GM12878 (cell line): ENCODE measurements at regions of chr7 and their contacts with region 1.

Region 1: DNA sequence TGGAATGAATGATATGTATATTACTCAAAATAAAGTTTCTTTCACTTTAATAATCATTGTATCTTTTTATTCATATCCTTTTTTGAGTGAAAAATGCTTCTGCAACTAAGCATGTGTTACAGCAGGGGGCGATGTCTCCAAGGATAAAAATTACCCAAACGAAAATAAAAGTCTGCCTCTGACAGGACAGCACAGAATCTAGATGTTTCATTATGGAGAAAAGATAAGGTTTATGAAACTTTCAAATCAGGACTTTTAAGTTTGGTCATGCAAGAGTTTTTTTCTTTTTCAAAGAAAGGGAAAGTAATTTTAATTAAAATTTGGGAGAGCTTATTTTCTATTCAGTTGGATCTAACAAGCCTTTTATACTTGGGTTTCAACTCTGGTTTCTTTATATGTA is 48.4 kb downstream of the TES start:
- DNase-seq: peak; percentile 23
- ATAC-seq: peak; percentile 59
- H3K4me3 ChIP-seq: no peak overlapping the region
- H3K27ac ChIP-seq: no peak overlapping the region
- H3K4me1 ChIP-seq: no peaks in the 10 kb centered on the region
- H3K27me3 ChIP-seq: no peaks in the 10 kb centered on the region
- CTCF ChIP-seq: peak; percentile 53 to 76 (median 65); a peak in 5 of 6 replicates
- EP300 ChIP-seq: no peak
- POLR2A ChIP-seq: no peak
- RAD21 ChIP-seq: peak; percentile 92

Region 2: DNA sequence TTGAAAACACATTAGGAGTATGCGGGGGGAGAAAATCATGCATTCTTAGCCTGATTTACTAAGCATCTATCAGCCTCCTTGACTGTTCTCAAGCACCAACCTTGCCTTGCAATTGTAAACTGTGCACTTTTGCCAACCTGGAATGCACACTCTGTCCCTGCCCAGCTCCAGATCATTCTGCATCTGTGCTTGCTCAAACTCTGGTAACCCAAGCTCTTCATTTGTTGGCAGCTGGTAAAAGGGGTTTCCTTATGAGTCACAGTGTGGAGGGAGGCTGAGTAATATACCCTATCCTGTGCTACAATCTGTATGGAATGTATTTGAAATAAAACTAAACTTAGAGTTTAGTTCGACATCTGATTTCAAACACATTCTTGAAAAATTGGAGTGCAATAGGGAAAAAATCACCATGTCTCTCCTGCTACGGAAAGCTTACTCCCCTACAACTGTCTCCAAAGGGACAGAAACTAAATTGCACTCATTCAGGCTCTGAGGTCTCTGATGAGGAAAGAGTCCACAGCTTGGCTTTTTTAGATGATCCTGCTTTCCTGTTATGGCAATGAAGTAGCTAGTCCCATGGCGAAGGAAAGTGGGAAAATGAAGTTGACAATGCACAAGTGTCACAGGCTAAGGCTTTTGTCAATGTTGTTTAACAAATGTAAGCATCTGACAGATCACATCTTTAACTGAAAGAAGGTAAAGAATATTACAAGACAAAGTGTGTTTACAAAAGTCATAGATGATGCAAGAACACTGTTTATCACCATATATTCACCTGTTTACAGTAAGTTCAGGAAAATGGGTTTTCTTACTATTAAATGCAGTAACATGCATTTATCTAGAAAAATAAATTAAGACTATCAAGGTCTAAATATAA is 13.5 kb after region 1 on chr7:
- CTCF ChIA-PET with region 1: interaction called, 14 read pairs
- POLR2A ChIA-PET with region 1: no interaction called
- RAD21 ChIA-PET with region 1: interaction called, 3 read pairs
- SMC1A ChIA-PET with region 1: interaction called, 3 read pairs
- in situ Hi-C with region 1: no loop called
- intact Hi-C with region 1: no loop called
- DNase-seq: no peak
- ATAC-seq: peak; percentile 45; the same call in 2 of the 3 replicates
- H3K4me3 ChIP-seq: no peak overlapping the region
- H3K27ac ChIP-seq: no peak overlapping the region
- H3K4me1 ChIP-seq: no peaks in the 10 kb centered on the region
- H3K27me3 ChIP-seq: no peaks in the 10 kb centered on the region
- CTCF ChIP-seq: no peak
- EP300 ChIP-seq: no peak
- POLR2A ChIP-seq: no peak
- RAD21 ChIP-seq: no peak

Region 3: DNA sequence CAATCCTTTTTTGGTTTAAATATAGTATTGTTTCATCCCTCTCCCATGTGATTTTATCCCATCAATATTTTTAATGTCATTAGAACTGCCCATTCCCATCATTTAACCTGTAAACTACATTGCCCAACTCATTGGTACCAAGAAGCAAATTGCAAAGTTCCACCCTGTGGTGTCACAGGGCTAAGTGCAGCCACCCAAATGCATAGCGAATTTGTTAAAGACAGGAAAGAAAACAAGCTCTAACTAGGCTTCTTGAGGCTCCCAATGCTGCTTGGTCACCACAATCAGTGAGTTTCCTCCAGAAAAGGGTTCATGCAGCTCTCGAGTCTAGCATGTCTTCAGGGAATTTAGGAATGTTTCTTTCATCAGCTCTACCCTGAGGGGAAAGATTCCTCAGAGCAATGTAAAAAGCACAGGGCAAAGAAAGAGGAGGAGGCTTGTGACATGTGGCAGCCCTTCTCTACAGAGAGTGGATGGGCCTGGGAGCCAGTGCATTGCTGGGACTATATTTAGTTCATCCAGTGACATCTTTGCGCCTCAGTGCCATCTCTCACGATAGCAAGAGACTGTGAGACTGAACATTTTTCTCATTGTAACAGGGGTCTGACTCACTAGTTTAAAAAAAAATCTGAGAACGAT is 324.2 kb after region 1 on chr7:
- CTCF ChIA-PET with region 1: interaction called, 119 read pairs
- POLR2A ChIA-PET with region 1: interaction called, 3 read pairs
- RAD21 ChIA-PET with region 1: interaction called, 7 read pairs
- SMC1A ChIA-PET with region 1: interaction called, 156 read pairs
- in situ Hi-C with region 1: loop called (anchors 5 kb)
- intact Hi-C with region 1: no loop called
- DNase-seq: no peak
- ATAC-seq: peak; percentile 78
- H3K4me3 ChIP-seq: no peak overlapping the region; the same call in 1 of the 2 replicates
- H3K27ac ChIP-seq: peak overlapping the region; percentile 89
- H3K4me1 ChIP-seq: peaks cover 37% of the 10 kb centered on the region
- H3K27me3 ChIP-seq: no peaks in the 10 kb centered on the region
- CTCF ChIP-seq: no peak
- EP300 ChIP-seq: no peak
- POLR2A ChIP-seq: no peak
- RAD21 ChIP-seq: no peak